ENCODE measurements at regions of chr6 and their contacts with region 1.

Region 1: GRCh38 chr6:169627736-169628607 is 73.9 kb downstream of the WDR27 start:
- DNase-seq: no peak
- ATAC-seq: no peak
- H3K4me3 ChIP-seq: no peak overlapping the region
- H3K4me3 Mint-ChIP-seq: no peak overlapping the region
- H3K27ac ChIP-seq: no peak overlapping the region
- H3K27ac Mint-ChIP-seq: no peak overlapping the region
- H3K4me1 ChIP-seq: no peaks in the 10 kb centered on the region
- H3K4me1 Mint-ChIP-seq: no peaks in the 10 kb centered on the region
- H3K27me3 ChIP-seq: no peaks in the 10 kb centered on the region
- H3K27me3 Mint-ChIP-seq: no peaks in the 10 kb centered on the region

Region 2: DNA sequence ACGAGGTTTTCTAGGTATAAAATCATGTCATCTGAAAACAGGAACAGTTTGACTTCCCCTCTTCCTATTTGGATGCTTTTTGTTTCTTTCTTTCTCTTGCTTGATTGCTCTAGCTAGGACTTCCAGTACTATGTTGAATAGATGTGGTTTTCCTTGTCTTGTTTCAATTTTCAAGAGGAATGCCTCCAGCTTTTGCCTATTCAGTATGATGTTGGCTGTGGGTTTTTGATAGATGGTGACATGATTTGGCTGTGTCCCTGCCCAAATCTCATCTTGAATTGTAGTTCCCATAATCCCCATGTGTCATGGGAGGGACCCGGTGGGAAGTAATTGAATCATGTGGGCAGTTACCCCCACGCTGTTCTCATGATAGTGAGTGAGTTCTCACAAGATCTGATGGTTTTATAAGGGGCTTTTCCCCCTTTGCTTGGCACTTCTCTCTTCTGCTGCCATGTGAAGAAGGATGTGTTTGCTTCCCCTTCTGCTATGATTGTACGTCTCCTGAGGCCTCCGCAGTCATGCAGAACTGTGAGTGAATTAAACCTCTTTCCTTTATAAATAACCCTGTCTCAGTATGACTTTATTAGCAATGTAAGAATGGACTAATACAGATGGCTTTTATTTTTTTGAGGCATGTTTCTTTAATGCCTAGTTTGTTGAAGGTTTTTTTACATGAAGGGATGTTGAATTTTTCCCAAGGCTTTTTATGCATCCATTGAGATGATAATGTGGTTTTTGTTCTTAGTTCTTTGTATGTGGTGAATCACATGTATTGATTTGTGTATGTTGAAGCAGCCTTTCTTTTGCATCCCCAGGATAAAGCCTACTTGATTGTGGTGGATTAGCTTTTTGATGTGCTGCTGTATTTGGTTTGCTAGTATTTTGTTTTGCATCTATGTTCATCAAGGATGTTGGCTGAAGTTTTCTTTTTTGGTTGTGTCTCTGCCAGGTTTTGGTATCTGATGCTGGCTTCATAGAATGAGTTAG is 613.5 kb before region 1 on chr6:
- CTCF ChIA-PET with region 1: no interaction called
- POLR2A ChIA-PET with region 1: no interaction called
- DNase-seq: no peak
- ATAC-seq: no peak
- H3K4me3 ChIP-seq: no peak overlapping the region
- H3K4me3 Mint-ChIP-seq: no peak overlapping the region
- H3K27ac ChIP-seq: no peak overlapping the region
- H3K27ac Mint-ChIP-seq: no peak overlapping the region
- H3K4me1 ChIP-seq: no peaks in the 10 kb centered on the region
- H3K4me1 Mint-ChIP-seq: no peaks in the 10 kb centered on the region
- H3K27me3 ChIP-seq: peaks cover 0 to 9% of the 10 kb centered on the region in 2 experiments
- H3K27me3 Mint-ChIP-seq: peaks cover 26 to 35% of the 10 kb centered on the region in 2 donors

Region 3: GRCh38 chr6:169513478-169514193 is 114.3 kb before region 1 on chr6:
- CTCF ChIA-PET with region 1: no interaction called
- POLR2A ChIA-PET with region 1: no interaction called
- DNase-seq: no peak
- ATAC-seq: no peak
- H3K4me3 ChIP-seq: no peak overlapping the region
- H3K4me3 Mint-ChIP-seq: no peak overlapping the region
- H3K27ac ChIP-seq: no peak overlapping the region
- H3K27ac Mint-ChIP-seq: no peak overlapping the region
- H3K4me1 ChIP-seq: no peaks in the 10 kb centered on the region
- H3K4me1 Mint-ChIP-seq: no peaks in the 10 kb centered on the region
- H3K27me3 ChIP-seq: no peaks in the 10 kb centered on the region
- H3K27me3 Mint-ChIP-seq: no peaks in the 10 kb centered on the region

Region 4: DNA sequence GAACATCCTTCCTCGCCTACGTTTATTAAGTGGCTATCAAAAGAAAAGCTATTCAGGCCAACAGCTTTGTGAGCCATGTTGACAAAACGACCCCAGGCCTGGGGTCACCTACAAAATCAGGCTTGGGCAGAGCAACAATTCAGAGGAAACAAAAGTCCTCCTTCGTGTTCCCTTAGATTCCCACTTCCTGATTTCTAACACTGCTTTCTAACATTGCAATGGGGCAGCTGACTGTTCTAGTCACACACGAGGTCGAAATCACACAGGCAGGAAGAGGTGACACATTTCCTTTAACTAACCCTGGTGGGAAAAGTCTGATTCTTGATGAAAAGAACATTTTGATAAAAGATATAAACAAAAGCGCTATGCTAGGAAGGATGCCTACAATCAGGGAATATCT is 41.9 kb after region 1 on chr6:
- CTCF ChIA-PET with region 1: no interaction called
- POLR2A ChIA-PET with region 1: interaction called in 1 of 2 experiments, 14 read pairs
- DNase-seq: no peak
- ATAC-seq: no peak
- H3K4me3 ChIP-seq: no peak overlapping the region
- H3K4me3 Mint-ChIP-seq: no peak overlapping the region
- H3K27ac ChIP-seq: no peak overlapping the region
- H3K27ac Mint-ChIP-seq: peak overlapping the region in 1 of 2 donors; percentile 16
- H3K4me1 ChIP-seq: no peaks in the 10 kb centered on the region
- H3K4me1 Mint-ChIP-seq: peaks cover 0 to 16% (median 7%) of the 10 kb centered on the region in 3 donors
- H3K27me3 ChIP-seq: no peaks in the 10 kb centered on the region
- H3K27me3 Mint-ChIP-seq: no peaks in the 10 kb centered on the region

Region 5: DNA sequence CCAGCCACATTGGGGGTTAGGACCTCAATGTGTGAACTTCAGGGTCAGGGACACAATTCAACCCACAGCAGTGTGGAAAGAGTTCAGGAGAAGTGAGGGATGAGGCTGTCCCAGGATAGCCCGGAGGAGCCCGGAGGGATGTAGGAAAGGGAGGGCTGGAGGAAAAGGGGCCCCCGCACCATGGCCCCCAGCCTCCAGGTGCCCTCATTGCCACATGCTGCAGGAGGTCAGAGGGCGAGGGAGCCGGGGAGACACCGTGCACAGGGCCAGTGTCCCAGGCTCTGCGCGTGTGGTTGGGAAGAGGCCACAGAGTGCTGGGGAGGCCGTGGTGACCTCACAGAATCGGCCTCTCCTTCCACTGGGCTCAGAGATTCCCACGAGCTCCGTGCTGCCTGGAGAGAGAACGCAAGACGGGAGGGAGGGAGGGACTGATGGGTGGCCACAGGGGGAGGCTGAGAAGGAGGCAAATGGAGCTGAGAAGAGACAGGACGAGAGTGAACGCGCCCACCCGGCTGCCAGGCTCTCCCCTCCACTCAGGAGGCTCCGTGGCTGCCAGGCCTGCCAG is 447.8 kb after region 1 on chr6:
- CTCF ChIA-PET with region 1: no interaction called
- POLR2A ChIA-PET with region 1: no interaction called
- DNase-seq: peak in 1 of 35 experiments; percentile 14
- ATAC-seq: no peak
- H3K4me3 ChIP-seq: no peak overlapping the region
- H3K4me3 Mint-ChIP-seq: no peak overlapping the region
- H3K27ac ChIP-seq: no peak overlapping the region
- H3K27ac Mint-ChIP-seq: no peak overlapping the region
- H3K4me1 ChIP-seq: no peaks in the 10 kb centered on the region
- H3K4me1 Mint-ChIP-seq: no peaks in the 10 kb centered on the region
- H3K27me3 ChIP-seq: no peaks in the 10 kb centered on the region
- H3K27me3 Mint-ChIP-seq: peaks cover 8 to 9% of the 10 kb centered on the region in 2 donors